ENCODE measurements at regions of chr1 and their contacts with region 1.

Region 1: GRCh38 chr1:231460614-231461013 is 38.5 kb upstream of the EGLN1 start:
- DNase-seq: peak; percentile 71
- H3K4me3 Mint-ChIP-seq: no peak overlapping the region
- H3K27ac Mint-ChIP-seq: no peak overlapping the region
- H3K4me1 Mint-ChIP-seq: peaks cover 35% of the 10 kb centered on the region
- H3K27me3 Mint-ChIP-seq: peaks cover 61% of the 10 kb centered on the region

Region 2: DNA sequence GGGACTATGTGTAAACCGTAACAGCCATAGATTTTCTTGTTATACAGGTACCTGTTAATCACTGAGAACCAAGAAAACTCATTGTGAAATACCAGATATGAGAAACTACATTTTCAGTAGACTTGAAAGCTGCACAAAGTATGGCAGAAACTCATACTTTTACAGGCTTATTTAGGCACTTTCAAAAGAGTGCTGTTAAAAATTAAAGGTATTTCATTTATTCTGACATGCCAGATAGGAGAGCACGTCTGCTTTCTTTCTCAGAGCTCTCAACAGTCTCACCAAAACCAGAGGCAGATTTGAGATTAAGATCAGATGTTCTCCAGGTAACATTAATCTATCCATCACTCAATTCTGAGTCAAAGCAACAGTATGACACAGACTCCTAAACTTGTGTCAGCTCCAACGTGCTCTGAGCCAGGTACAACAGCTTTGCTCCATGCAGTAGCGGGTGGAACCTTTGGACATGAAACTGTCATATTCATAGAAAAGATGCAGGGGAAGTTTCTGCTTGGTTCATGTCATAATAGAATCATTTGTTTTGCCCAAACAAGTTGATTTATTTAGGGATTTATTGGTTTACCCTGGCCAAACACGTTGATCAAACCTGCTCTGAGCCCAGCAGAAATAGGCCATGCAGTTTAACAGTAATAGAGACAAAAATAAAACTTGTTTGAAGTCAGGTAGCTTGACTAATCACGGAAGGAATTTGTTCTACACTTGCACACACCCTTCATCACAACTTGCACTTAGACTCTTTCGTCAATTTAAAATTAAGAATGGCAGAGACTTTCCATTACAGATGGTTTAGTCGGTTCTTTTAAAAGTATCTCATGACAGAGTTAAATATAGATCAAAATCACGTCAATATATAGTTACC is 47.1 kb after region 1 on chr1:
- intact Hi-C with region 1: loop called (anchors 5 kb)
- DNase-seq: no peak
- H3K4me3 Mint-ChIP-seq: no peak overlapping the region
- H3K27ac Mint-ChIP-seq: no peak overlapping the region
- H3K4me1 Mint-ChIP-seq: peaks cover 23% of the 10 kb centered on the region
- H3K27me3 Mint-ChIP-seq: peaks cover 26% of the 10 kb centered on the region

Region 3: GRCh38 chr1:231528172-231529029 is 67.8 kb after region 1 on chr1 and contains the start of gene TSNAX:
- intact Hi-C with region 1: loop called (anchors 2 kb)
- DNase-seq: peak; percentile 89
- H3K4me3 Mint-ChIP-seq: peak within 1 kb of the TSS; percentile 97
- H3K27ac Mint-ChIP-seq: peak within 1 kb of the TSS; percentile 99
- H3K4me1 Mint-ChIP-seq: peaks cover 30% of the 10 kb centered on the region
- H3K27me3 Mint-ChIP-seq: no peaks in the 10 kb centered on the region
- total RNA-seq, gene TSNAX: 43.9 and 44.4 TPM in 2 replicates